Heart right ventricle (tissue), 16 donors: ENCODE measurements at regions of chr4 and their contacts with region 1.

Region 1: GRCh38 chr4:128863312-128864075 is 54.0 kb downstream of the JADE1 start:
- DNase-seq: peak; percentile 66 to 83
- ATAC-seq: peak; percentile 48 to 71 (median 65)
- H3K4me3 ChIP-seq: peak overlapping the region in 1 of 10 donors; percentile 0
- H3K27ac ChIP-seq: peak overlapping the region in 2 of 10 donors; percentile 26 to 46
- H3K4me1 ChIP-seq: peaks cover 3 to 54% (median 42%) of the 10 kb centered on the region in 9 donors
- H3K27me3 ChIP-seq: no peaks in the 10 kb centered on the region
- CTCF ChIP-seq: peak; percentile 82 to 94 (median 88)

Region 2: DNA sequence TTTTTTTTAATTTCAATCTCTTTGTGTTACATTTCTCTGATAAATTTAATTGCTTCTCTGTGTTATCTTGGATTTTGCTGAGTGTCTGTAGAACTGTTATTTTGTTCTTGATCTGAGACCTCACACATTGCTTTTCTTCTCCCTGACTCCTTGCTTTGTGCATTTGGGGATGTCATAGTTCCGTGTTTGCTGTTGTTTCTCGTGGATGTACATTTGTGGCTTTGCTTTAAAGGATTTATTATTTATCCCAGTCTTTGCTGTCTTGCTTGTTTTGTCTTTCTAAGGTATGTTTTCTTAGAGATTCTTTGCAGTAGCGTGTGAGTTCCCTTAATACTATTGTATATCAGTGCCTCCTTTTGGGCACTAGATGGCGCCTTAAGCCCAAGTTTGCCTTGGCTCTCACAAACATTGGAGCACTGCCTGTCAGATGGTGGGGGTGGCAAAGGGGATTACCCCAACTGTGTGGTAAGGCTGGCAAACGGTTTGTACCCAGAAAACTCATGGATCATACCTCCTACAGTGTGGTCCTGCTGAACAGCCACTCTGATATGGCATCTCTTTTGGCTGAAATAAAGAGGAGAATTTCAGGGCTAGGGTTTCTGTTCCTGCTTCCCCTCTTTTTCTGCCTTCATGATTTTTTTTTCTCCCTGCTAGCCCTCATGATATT is 672.2 kb before region 1 on chr4:
- intact Hi-C with region 1: loop called in 9 of 10 experiments (anchors 5 to 10 kb)
- DNase-seq: peak; percentile 21 to 55
- ATAC-seq: peak; percentile 74 to 92 (median 84)
- H3K4me3 ChIP-seq: no peak overlapping the region
- H3K27ac ChIP-seq: no peak overlapping the region
- H3K4me1 ChIP-seq: peaks cover 0 to 10% (median 0%) of the 10 kb centered on the region in 9 donors
- H3K27me3 ChIP-seq: no peaks in the 10 kb centered on the region
- CTCF ChIP-seq: peak; percentile 71 to 90 (median 86)

Region 3: DNA sequence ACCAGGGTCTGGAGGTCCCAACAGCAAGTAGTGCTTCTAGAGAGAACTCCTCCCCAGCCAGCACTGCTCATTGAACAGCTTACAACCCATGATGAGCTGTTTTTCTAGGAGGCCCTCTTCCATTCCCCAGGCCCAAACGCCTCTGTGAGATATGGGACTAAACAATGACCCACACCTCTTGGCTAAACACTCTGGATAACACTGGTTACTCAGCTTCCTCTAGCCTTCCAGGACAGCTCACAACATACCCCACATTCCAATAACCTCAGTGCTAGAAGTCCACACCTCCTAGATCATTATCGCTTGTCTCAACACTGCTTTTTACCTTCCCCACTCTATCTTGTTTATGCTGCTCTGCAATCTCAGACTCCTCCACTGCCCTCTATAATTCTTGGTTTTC is 540.5 kb before region 1 on chr4:
- intact Hi-C with region 1: no loop called
- DNase-seq: no peak
- ATAC-seq: no peak
- H3K4me3 ChIP-seq: no peak overlapping the region
- H3K27ac ChIP-seq: no peak overlapping the region
- H3K4me1 ChIP-seq: no peaks in the 10 kb centered on the region
- H3K27me3 ChIP-seq: no peaks in the 10 kb centered on the region
- CTCF ChIP-seq: no peak

Region 4: DNA sequence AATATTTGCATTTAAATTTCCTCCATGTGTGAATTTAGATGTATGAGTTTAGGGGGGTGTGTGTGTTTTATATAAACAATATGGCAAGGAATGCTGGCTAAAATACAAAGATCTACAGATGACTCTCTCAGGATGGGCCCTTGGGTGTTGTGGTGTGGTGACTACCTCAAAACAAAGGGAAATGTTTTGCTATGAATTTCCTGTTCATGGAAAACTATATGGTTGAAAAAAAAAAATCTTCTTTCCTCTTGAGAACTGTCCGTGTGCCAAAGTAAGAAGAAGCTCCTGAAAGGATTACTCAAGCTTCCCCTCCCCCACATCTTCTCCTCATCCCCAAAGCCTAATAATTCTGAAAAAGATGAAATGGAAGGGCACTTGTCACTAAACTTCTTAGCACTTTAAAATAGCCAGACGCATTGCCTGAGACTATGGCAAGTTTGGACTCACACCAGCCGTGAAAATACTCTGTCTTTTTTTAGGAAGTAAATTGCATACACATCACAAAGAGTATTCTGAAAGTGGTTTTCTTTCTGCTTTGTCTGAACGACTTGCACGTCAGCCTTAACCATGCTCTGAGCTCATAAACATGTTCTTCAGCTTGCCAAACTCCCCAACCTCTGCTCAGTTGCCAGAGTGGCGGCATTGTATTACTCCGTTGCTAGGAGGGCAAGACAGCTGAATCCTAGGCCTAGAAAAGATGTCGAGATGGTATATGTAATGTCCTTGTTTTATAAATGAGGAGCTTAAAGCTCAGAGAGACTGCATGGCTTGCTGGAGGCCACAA is 304.4 kb before region 1 on chr4:
- intact Hi-C with region 1: loop called in 4 of 10 experiments (anchors 5 to 10 kb)
- DNase-seq: no peak
- ATAC-seq: peak in 7 of 8 donors; percentile 20 to 72 (median 54)
- H3K4me3 ChIP-seq: no peak overlapping the region
- H3K27ac ChIP-seq: peak overlapping the region in 6 of 10 donors; percentile 5 to 80 (median 36)
- H3K4me1 ChIP-seq: peaks cover 0 to 23% (median 7%) of the 10 kb centered on the region in 9 donors
- H3K27me3 ChIP-seq: no peaks in the 10 kb centered on the region
- CTCF ChIP-seq: no peak

Region 5: GRCh38 chr4:128565565-128566186 is 297.8 kb before region 1 on chr4:
- intact Hi-C with region 1: loop called (anchors 5 to 10 kb)
- DNase-seq: peak in 1 of 2 donors; percentile 39
- ATAC-seq: peak; percentile 50 to 80 (median 77)
- H3K4me3 ChIP-seq: no peak overlapping the region
- H3K27ac ChIP-seq: no peak overlapping the region
- H3K4me1 ChIP-seq: peaks cover 0 to 21% (median 4%) of the 10 kb centered on the region in 9 donors
- H3K27me3 ChIP-seq: no peaks in the 10 kb centered on the region
- CTCF ChIP-seq: peak; percentile 25 to 66 (median 61)

Region 6: GRCh38 chr4:128782076-128782715 is 81.3 kb before region 1 on chr4:
- intact Hi-C with region 1: loop called in 4 of 10 experiments (anchors 1 to 10 kb)
- DNase-seq: peak; percentile 24 to 26
- ATAC-seq: peak in 7 of 8 donors; percentile 55 to 79 (median 64)
- H3K4me3 ChIP-seq: no peak overlapping the region
- H3K27ac ChIP-seq: no peak overlapping the region
- H3K4me1 ChIP-seq: peaks cover 0 to 1% (median 0%) of the 10 kb centered on the region in 9 donors
- H3K27me3 ChIP-seq: no peaks in the 10 kb centered on the region
- CTCF ChIP-seq: peak in 7 of 9 donors; percentile 33 to 67 (median 54)

Region 7: DNA sequence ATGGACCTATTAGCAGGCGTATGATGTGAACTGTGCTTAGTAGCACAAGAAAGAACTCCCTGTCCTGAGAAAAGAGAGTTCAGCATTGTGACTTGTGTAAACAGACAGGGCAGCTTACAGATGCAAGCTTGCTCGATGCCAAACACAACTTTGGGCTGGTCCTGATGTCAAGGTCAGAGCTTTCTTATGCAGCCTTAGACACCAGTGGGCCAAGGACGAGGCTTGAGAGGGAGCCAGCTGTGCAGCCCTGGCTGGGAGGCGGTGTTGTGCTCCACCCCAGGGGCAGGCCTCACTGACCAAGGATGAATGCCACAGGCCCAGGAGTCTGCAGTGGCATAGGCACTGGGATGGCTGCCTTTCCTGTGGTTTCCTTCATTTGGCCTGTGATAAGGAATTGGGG is 18.6 kb before region 1 on chr4:
- intact Hi-C with region 1: no loop called
- DNase-seq: peak; percentile 57 to 66
- ATAC-seq: peak; percentile 63 to 91 (median 83)
- H3K4me3 ChIP-seq: no peak overlapping the region
- H3K27ac ChIP-seq: peak overlapping the region in 9 of 10 donors; percentile 32 to 87 (median 62)
- H3K4me1 ChIP-seq: peaks cover 12 to 79% (median 54%) of the 10 kb centered on the region in 9 donors
- H3K27me3 ChIP-seq: no peaks in the 10 kb centered on the region
- CTCF ChIP-seq: no peak